K562 (cell line): ENCODE measurements at regions of chr10 and their contacts with region 1.

Region 1: GRCh38 chr10:62816331-62817120 is at the start of gene EGR2:
- DNase-seq: peak; percentile 80 to 94 (median 88)
- ATAC-seq: peak; percentile 92
- H3K4me3 ChIP-seq: peak within 1 kb of the TSS; percentile 74
- H3K27ac ChIP-seq: peak within 1 kb of the TSS; percentile 70
- H3K4me1 ChIP-seq: peaks cover 7 to 50% of the 10 kb centered on the region in 2 experiments; a peak in 3 of 5 replicates
- H3K27me3 ChIP-seq: peaks cover 19 to 53% of the 10 kb centered on the region in 2 experiments; a peak in 4 of 5 replicates
- CTCF ChIP-seq: no peak
- EP300 ChIP-seq: no peak
- POLR2A ChIP-seq: peak; percentile 64
- RAD21 ChIP-seq: no peak
- polyA plus RNA-seq, gene EGR2: not detected

Region 2: GRCh38 chr10:61750929-61751471 is 1065.5 kb before region 1 on chr10:
- CTCF ChIA-PET with region 1: no interaction called
- POLR2A ChIA-PET with region 1: no interaction called
- in situ Hi-C with region 1: no loop called
- intact Hi-C with region 1: no loop called
- DNase-seq: peak; percentile 80 to 93 (median 86)
- ATAC-seq: peak; percentile 97
- H3K4me3 ChIP-seq: no peak overlapping the region
- H3K27ac ChIP-seq: peak overlapping the region; percentile 66; the same call in 2 of the 3 replicates
- H3K4me1 ChIP-seq: peaks cover 4 to 36% of the 10 kb centered on the region in 2 experiments; a peak in 3 of 5 replicates
- H3K27me3 ChIP-seq: no peaks in the 10 kb centered on the region
- CTCF ChIP-seq: peak; percentile 92 to 97 (median 94)
- EP300 ChIP-seq: peak; percentile 34; the same call in 1 of the 2 replicates
- POLR2A ChIP-seq: no peak
- RAD21 ChIP-seq: peak; percentile 79 to 92

Region 3: DNA sequence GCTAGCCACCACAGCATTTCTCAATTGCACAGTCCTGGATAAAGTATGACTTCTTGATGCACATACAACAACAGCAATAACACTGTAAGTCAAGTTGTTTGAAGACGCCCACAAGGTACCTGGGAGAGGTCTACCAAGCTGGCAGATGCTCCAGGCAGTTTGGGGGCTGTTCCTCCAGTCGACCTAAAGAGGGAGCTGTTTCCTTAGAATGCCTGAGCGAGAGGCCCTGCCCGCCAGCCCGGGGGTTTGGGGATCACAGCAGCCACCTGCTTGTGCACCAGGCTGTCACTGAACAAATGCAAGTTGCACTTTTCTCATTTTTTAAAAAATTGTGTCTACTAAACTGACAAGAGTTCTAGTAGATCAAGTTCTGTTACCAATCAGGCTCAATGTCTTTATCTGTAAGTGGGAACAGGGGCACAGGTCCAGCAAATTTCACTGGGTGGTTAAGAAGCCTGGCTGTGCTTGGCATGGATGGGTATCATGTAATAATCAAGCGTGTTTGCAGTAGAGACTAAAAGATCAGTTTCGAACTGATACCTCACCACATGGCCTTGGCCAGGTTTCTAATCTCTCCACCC is 205.8 kb before region 1 on chr10:
- CTCF ChIA-PET with region 1: no interaction called
- POLR2A ChIA-PET with region 1: no interaction called
- in situ Hi-C with region 1: no loop called
- intact Hi-C with region 1: loop called (anchors 5 kb)
- DNase-seq: peak; percentile 56 to 67 (median 59)
- ATAC-seq: peak; percentile 93
- H3K4me3 ChIP-seq: no peak overlapping the region
- H3K27ac ChIP-seq: no peak overlapping the region
- H3K4me1 ChIP-seq: no peaks in the 10 kb centered on the region
- H3K27me3 ChIP-seq: no peaks in the 10 kb centered on the region
- CTCF ChIP-seq: peak; percentile 71 to 82 (median 80)
- EP300 ChIP-seq: no peak
- POLR2A ChIP-seq: no peak
- RAD21 ChIP-seq: peak; percentile 65 to 75

Region 4: GRCh38 chr10:62732841-62733653 is 83.5 kb before region 1 on chr10:
- CTCF ChIA-PET with region 1: no interaction called
- POLR2A ChIA-PET with region 1: no interaction called
- in situ Hi-C with region 1: no loop called
- intact Hi-C with region 1: no loop called
- DNase-seq: no peak
- ATAC-seq: no peak
- H3K4me3 ChIP-seq: no peak overlapping the region
- H3K27ac ChIP-seq: no peak overlapping the region
- H3K4me1 ChIP-seq: peaks cover 2 to 14% of the 10 kb centered on the region in 2 experiments; a peak in 4 of 5 replicates
- H3K27me3 ChIP-seq: no peaks in the 10 kb centered on the region
- CTCF ChIP-seq: no peak
- EP300 ChIP-seq: no peak
- POLR2A ChIP-seq: no peak
- RAD21 ChIP-seq: no peak

Region 5: GRCh38 chr10:63171926-63172325 is 355.4 kb after region 1 on chr10:
- CTCF ChIA-PET with region 1: no interaction called
- POLR2A ChIA-PET with region 1: no interaction called
- in situ Hi-C with region 1: no loop called
- intact Hi-C with region 1: no loop called
- DNase-seq: no peak
- ATAC-seq: no peak
- H3K4me3 ChIP-seq: no peak overlapping the region
- H3K27ac ChIP-seq: no peak overlapping the region
- H3K4me1 ChIP-seq: no peaks in the 10 kb centered on the region
- H3K27me3 ChIP-seq: no peaks in the 10 kb centered on the region
- CTCF ChIP-seq: no peak
- EP300 ChIP-seq: no peak
- POLR2A ChIP-seq: no peak
- RAD21 ChIP-seq: no peak